ENCODE measurements at regions of chr3 and their contacts with region 1.

Region 1: GRCh38 chr3:126134219-126134975 is 46.0 kb downstream of the ALDH1L1 start:
- DNase-seq: peak; percentile 54 to 81 (median 58)
- ATAC-seq: peak; percentile 60 to 86 (median 77)
- H3K4me3 ChIP-seq: no peak overlapping the region
- H3K27ac ChIP-seq: no peak overlapping the region
- H3K4me1 ChIP-seq: peaks cover 0 to 3% (median 0%) of the 10 kb centered on the region in 12 donors
- H3K27me3 ChIP-seq: no peaks in the 10 kb centered on the region
- CTCF ChIP-seq: peak; percentile 62 to 89 (median 82)
- POLR2A ChIP-seq: no peak

Region 2: GRCh38 chr3:126197854-126198584 is 63.6 kb after region 1 on chr3:
- intact Hi-C with region 1: loop called in 6 of 10 experiments (anchors 2 to 5 kb)
- DNase-seq: peak; percentile 38 to 76 (median 56)
- ATAC-seq: peak; percentile 73 to 96 (median 86)
- H3K4me3 ChIP-seq: no peak overlapping the region
- H3K27ac ChIP-seq: peak overlapping the region in 2 of 12 donors; percentile 4 to 25
- H3K4me1 ChIP-seq: no peaks in the 10 kb centered on the region
- H3K27me3 ChIP-seq: no peaks in the 10 kb centered on the region
- CTCF ChIP-seq: peak; percentile 52 to 76 (median 65)
- POLR2A ChIP-seq: no peak

Region 3: DNA sequence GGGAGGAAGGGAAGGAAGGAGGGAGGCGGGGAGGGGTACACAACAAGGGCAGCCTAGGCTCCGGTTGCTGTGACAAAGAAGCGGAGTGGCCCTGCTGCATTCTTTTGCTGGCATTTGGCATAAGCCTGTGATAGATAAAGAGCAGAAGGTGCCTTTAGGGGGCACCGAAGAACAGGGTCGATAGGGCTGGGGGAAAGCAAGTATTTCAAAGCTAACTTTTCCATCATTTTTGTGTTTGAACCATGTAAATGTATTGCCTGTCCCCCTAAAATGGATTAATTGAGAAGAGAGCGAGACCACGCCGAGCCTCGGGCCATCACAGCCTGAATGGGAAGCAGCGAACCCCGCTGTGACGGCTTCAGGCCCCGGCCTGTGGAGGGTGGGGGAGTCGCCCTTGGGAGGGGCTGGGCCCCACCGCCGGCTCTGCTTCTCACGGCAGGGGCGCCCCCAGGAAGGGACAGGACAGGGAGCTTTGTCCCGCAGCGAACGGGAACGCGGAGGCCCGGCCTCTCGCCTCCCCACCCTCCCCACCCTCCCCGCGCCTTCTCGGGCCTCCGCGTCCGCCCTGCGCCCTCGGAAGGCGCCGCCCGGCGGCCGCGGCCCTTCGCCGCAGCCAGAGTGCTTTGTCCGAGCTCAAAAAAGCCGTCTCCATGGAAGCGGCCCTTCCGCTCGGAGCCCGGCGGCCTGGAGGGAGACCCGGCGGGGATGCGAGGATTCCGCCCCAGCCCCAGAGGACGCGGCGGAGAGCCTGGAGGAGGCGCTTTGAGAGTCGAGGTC is 78.4 kb after region 1 on chr3:
- intact Hi-C with region 1: loop called in 3 of 10 experiments (anchors 2 to 10 kb)
- DNase-seq: peak; percentile 44 to 82 (median 60)
- ATAC-seq: peak; percentile 32 to 82 (median 66)
- H3K4me3 ChIP-seq: peak overlapping the region; percentile 26 to 69 (median 56)
- H3K27ac ChIP-seq: peak overlapping the region in 11 of 12 donors; percentile 57 to 84 (median 70)
- H3K4me1 ChIP-seq: peaks cover 0 to 37% (median 18%) of the 10 kb centered on the region in 12 donors
- H3K27me3 ChIP-seq: peaks cover 0 to 47% (median 5%) of the 10 kb centered on the region in 9 donors
- CTCF ChIP-seq: peak in 11 of 12 donors; percentile 19 to 67 (median 47)
- POLR2A ChIP-seq: no peak

Region 4: GRCh38 chr3:126245811-126246727 is 111.7 kb after region 1 on chr3:
- intact Hi-C with region 1: loop called in 1 of 10 experiments (anchors 10 kb)
- DNase-seq: peak in 4 of 5 donors; percentile 40 to 59 (median 48)
- ATAC-seq: peak; percentile 75 to 90 (median 88)
- H3K4me3 ChIP-seq: no peak overlapping the region
- H3K27ac ChIP-seq: no peak overlapping the region
- H3K4me1 ChIP-seq: peaks cover 0 to 6% (median 0%) of the 10 kb centered on the region in 12 donors
- H3K27me3 ChIP-seq: peaks cover 0 to 3% (median 0%) of the 10 kb centered on the region in 9 donors
- CTCF ChIP-seq: peak; percentile 37 to 64 (median 54)
- POLR2A ChIP-seq: no peak

Region 5: GRCh38 chr3:126389112-126389793 is 254.9 kb after region 1 on chr3:
- intact Hi-C with region 1: loop called (anchors 1 to 5 kb)
- DNase-seq: peak; percentile 83 to 96 (median 93)
- ATAC-seq: peak; percentile 88 to 98 (median 96)
- H3K4me3 ChIP-seq: peak overlapping the region in 11 of 12 donors; percentile 4 to 63 (median 53)
- H3K27ac ChIP-seq: peak overlapping the region; percentile 69 to 88 (median 82)
- H3K4me1 ChIP-seq: peaks cover 0 to 10% (median 5%) of the 10 kb centered on the region in 12 donors
- H3K27me3 ChIP-seq: peaks cover 0 to 12% (median 0%) of the 10 kb centered on the region in 9 donors
- CTCF ChIP-seq: peak; percentile 78 to 100 (median 98)
- POLR2A ChIP-seq: peak in 1 of 2 donors; percentile 55

Region 6: DNA sequence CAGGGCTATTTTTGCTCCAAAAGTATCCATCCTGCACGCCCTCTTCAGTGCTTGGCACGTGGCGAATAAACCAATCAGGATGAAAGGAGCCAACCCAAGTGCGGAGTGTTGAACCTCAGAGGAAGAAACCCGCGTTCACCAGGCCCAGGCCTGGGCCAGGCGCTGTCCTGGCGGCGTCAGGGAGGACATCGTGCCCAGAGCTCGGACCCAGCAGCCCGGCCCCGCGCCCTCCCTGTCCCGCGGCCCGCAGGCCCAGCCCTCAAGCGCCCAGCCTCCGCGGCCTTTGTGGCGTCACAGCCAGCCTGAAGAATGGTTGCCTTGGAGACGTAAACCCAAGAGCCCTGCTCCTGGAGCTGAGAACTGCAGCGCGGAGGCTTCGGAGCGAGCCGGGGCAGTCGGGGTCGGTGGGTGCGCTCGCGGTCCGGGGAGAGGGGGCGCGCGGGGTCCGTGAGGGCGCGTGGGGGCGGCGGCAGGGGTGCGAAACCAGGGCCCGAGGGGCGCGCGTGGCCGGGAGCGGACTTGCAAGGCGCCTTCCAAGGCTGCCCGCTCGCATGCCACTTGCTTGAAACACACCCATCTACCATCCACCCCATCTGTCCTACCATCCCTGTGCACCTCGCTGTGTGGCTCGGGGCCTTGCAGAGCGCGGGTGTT is 260.3 kb after region 1 on chr3 and contains the start of gene CFAP100:
- intact Hi-C with region 1: loop called (anchors 1 to 5 kb)
- DNase-seq: peak in 3 of 5 donors; percentile 34 to 56 (median 48)
- ATAC-seq: peak; percentile 16 to 78 (median 62)
- H3K4me3 ChIP-seq: peak within 1 kb of the TSS in 11 of 12 donors; percentile 13 to 50 (median 30)
- H3K27ac ChIP-seq: no peak within 1 kb of the TSS
- H3K4me1 ChIP-seq: peaks cover 0 to 9% (median 2%) of the 10 kb centered on the region in 12 donors
- H3K27me3 ChIP-seq: peaks cover 0 to 26% (median 0%) of the 10 kb centered on the region in 9 donors
- CTCF ChIP-seq: no peak
- POLR2A ChIP-seq: no peak
- total RNA-seq, gene CFAP100: not detected